ENCODE measurements at regions of chr13 and their contacts with region 1.

Region 1: DNA sequence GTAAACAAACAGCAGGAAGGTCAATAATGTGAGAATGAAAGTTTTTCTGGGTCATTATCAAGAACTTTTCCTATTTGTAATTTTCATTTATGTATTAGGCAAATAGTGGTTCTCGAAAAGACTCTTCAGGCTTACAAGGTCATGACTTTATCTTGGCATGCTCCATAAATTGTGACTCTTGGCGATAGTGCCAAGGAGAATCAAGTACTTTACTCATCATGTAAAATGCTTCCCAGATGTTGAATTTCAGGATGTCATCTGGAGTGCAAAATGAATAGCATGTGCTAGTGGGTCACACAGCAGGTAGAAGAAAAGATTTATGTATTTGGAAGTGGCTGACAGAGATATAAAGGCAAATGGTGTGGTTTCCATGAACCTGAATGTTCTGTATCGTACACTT is 1492.7 kb upstream of the PCDH20 start:
- DNase-seq: no peak
- ATAC-seq: no peak
- H3K4me3 ChIP-seq: no peak overlapping the region
- H3K27ac ChIP-seq: no peak overlapping the region
- H3K4me1 ChIP-seq: no peaks in the 10 kb centered on the region
- H3K27me3 ChIP-seq: no peaks in the 10 kb centered on the region
- CTCF ChIP-seq: no peak

Region 2: GRCh38 chr13:63327584-63327983 is 419.3 kb after region 1 on chr13:
- intact Hi-C with region 1: loop called in 1 of 2 experiments (anchors 5 kb)
- DNase-seq: no peak
- ATAC-seq: no peak
- H3K4me3 ChIP-seq: no peak overlapping the region
- H3K27ac ChIP-seq: no peak overlapping the region
- H3K4me1 ChIP-seq: no peaks in the 10 kb centered on the region
- H3K27me3 ChIP-seq: no peaks in the 10 kb centered on the region
- CTCF ChIP-seq: no peak

Measured in psoas muscle (tissue), 8 donors.